GM13977 (cell line): ENCODE measurements at regions of chr17 and their contacts with region 1.

Region 1: GRCh38 chr17:49707608-49708514 is at the start of gene SLC35B1:
- DNase-seq: peak; percentile 98
- CTCF ChIP-seq: peak; percentile 99

Region 2: DNA sequence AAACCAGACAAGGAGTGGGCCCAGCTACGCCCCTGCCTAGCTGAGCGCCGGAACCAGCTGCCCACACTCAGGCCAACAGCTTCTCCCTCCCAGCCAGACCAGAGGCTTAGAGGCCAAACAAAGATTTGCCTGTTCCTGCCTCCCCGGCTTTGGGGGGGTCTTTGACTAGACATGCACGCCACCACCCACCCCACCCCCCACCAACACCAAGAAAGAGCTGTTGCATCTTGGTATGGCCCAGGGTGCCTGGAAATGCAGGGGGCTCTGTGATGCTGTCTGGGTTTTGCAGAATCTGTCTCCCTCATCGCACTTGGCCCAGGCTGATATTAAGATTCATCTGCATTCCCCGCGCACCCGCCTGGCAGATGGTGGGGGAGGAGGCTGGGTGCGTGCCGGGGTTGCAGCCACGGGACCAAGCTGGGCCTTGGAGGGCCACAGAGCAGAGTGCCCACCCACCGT is 133.5 kb before region 1 on chr17:
- in situ Hi-C with region 1: loop called (anchors 5 kb)
- DNase-seq: peak; percentile 11
- CTCF ChIP-seq: no peak

Region 3: DNA sequence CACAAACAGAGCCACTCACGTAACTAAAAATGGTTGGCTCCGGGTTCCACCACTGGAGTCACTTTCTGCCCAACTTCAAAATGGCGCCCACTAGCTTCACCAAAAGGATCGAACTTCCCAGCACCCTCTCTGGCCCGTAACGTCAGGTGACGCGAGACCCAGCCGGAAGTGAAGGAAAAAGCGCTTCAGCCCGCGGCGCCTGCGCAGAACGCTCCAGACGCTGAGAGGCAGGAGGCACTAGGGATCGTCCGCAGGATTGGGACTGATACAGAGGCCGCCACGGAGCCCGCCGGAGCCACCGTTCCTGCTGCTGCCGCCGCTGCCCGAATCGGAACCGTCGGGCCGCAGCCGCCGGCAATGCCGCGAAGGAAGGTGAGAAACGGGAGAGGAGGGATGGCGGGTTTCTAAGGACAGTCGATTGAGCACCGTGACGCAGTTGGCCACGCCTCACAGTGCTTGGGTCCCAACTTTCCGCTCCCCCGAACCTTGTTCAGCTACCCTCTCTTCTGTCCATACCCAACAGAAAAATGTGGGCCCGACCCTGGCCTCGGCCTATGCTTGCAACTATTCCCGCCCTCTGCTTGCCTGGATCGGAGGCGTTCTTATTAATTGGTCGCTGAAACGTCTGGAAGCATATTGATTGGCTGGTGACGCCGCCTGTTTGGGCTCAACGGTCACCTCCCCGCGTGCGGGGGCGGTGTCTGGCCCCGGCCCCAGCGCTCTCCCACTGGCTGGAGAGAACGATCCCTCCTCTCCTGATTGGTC is 80.8 kb after region 1 on chr17 and contains the start of gene KAT7:
- in situ Hi-C with region 1: loop called (anchors 10 kb)
- DNase-seq: peak; percentile 93
- CTCF ChIP-seq: no peak